Right ventricle myocardium inferior (tissue), 1 donor: ENCODE measurements at regions of chr4 and their contacts with region 1.

Region 1: GRCh38 chr4:169612871-169613859 is 782 bp upstream of the NEK1 start:
- DNase-seq: peak; percentile 76
- ATAC-seq: peak; percentile 75

Region 2: GRCh38 chr4:169707958-169708643 is 94.9 kb after region 1 on chr4:
- intact Hi-C with region 1: loop called (anchors 5 kb)
- DNase-seq: no peak
- ATAC-seq: peak; percentile 26

Region 3: GRCh38 chr4:169730564-169730963 is 117.4 kb after region 1 on chr4:
- intact Hi-C with region 1: no loop called
- DNase-seq: no peak
- ATAC-seq: no peak

Region 4: DNA sequence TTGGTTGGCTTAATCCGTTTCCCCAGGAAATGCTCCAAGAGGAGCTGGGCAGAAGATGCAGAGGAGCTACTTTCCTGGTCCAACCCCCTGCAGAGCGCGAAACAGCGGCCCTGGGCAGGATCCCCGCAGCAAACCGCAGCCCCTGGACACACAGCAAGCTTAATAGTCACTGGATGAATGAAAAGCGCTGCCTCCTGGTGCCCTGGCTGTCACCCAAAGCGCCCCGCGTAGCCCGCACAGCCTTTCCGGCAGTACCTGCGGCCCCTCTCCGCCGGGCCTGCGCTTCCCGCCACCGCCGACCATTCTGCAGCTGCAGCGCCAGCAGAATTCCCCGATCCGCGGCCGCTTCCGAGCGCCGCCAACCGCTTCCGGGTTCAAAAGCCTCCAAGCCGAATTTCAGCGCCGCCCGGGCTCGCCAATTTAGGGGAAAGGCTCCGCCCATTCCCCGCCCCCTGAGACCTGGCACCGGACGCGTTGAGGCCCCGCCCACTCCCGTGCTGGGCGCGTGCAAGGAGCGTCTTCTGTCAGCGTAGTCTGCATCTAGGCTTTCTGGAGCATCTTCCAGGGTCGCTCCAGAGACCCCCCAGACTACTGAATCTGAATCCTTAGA is 144.5 kb after region 1 on chr4 and contains the start of gene HPF1:
- intact Hi-C with region 1: loop called (anchors 5 kb)
- DNase-seq: peak; percentile 96
- ATAC-seq: peak; percentile 97
- total RNA-seq, gene HPF1: 18.4 TPM

Region 5: DNA sequence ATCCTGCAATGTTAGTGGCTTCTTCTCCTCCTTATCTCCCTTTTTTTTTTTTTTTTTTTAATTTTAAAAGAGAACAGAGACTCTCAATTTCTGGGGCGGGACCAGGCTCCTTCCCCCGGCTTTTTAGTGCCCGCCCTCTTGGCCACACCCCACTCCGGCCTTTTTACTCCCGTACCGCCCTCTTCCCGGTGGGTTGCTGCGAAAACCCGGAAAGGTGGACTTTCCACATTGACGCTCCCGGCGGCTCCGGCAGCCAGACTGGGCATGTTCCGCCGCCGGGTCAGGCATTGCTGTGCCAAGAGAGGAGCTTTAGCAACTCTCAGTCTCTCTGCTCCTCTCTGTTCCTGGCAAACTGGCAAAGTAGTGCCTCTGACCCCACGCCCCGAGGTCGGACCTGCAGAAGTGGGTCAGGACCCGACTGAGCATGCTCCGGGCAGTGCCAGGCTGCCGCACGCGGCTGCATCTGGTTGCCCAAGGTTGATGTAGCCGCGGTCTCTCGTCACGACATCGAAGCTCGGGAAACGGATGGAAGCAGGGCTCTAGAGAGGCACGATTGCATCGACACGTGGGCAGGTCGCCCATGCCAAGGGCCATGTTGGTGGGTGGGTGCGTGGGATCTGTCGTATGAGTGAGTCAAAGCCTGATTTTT is 414.1 kb after region 1 on chr4:
- intact Hi-C with region 1: loop called (anchors 5 kb)
- DNase-seq: peak; percentile 93
- ATAC-seq: peak; percentile 94

Region 6: DNA sequence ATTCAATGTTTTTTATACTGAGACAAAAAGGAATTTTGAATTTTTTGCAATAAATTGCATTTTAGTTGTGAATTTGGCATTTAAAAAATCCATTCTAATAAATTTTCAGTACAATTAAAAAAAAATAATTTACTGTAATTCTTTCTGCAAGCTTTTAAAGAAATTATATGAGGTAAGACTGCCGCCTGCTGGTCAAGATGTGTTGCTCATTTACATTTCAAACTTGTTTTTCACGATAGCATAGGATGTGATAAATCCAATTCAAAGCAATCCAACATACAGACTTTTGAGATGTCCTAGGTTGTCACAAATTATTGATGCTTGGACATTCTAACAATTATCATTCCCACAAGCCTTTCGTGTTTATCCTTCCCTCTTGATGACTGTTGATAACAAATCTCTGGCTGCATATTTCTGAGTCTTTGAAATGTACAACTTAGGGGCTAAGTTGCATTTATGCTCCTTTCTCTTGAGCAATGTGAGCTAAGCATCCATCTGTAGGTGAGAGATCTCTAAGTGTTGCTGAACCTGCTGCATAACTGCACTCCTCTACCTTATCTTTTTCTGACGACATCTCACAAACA is 434.7 kb after region 1 on chr4:
- intact Hi-C with region 1: loop called (anchors 2 kb)
- DNase-seq: no peak
- ATAC-seq: no peak